ENCODE measurements at regions of chr10 and their contacts with region 1.

Region 1: GRCh38 chr10:63166742-63167258 is 33.7 kb downstream of the NRBF2 start:
- DNase-seq: peak; percentile 19
- ATAC-seq: peak; percentile 84
- H3K4me3 Mint-ChIP-seq: no peak overlapping the region
- H3K27ac Mint-ChIP-seq: no peak overlapping the region
- H3K4me1 Mint-ChIP-seq: peaks cover 35% of the 10 kb centered on the region
- H3K27me3 Mint-ChIP-seq: no peaks in the 10 kb centered on the region
- CTCF ChIP-seq: peak; percentile 79

Region 2: GRCh38 chr10:63073931-63074330 is 92.9 kb before region 1 on chr10:
- CTCF ChIA-PET with region 1: no interaction called
- POLR2A ChIA-PET with region 1: no interaction called
- intact Hi-C with region 1: no loop called
- DNase-seq: no peak
- ATAC-seq: no peak
- H3K4me3 Mint-ChIP-seq: no peak overlapping the region
- H3K27ac Mint-ChIP-seq: no peak overlapping the region
- H3K4me1 Mint-ChIP-seq: peaks cover 7% of the 10 kb centered on the region
- H3K27me3 Mint-ChIP-seq: peaks cover 21% of the 10 kb centered on the region
- CTCF ChIP-seq: no peak

Region 3: DNA sequence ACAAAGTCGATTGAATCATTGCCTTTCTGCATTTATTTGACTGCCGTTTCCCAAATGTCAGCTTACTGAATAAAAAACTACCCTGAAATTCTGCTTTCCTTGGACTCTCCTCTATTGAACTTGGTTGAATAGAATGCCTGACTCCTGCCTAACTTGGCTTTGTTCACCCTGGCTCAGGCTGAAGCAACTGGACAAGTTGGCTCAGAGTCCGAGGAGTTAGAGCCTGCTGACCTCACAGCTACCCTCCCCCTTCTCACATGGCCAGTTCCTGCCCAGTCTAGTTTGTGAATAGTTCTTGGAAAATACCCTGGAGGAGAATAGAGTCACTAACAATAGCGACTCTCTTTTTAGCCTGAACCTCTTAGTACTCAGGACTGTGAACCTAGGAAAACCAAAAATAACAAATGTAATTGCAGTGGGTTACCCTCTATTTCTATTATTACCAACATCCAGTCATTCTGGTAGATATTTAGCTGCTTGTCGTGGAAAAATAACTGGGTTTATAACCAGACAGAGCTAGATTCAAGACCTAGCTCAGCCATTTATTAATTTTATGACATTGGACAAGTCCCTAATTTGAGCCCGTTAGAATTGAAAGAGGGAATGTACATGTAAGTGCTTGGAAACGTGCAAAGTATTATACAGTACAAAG is 50.9 kb before region 1 on chr10:
- CTCF ChIA-PET with region 1: no interaction called
- POLR2A ChIA-PET with region 1: no interaction called
- intact Hi-C with region 1: no loop called
- DNase-seq: no peak
- ATAC-seq: no peak
- H3K4me3 Mint-ChIP-seq: no peak overlapping the region
- H3K27ac Mint-ChIP-seq: no peak overlapping the region
- H3K4me1 Mint-ChIP-seq: no peaks in the 10 kb centered on the region
- H3K27me3 Mint-ChIP-seq: no peaks in the 10 kb centered on the region
- CTCF ChIP-seq: no peak

Region 4: DNA sequence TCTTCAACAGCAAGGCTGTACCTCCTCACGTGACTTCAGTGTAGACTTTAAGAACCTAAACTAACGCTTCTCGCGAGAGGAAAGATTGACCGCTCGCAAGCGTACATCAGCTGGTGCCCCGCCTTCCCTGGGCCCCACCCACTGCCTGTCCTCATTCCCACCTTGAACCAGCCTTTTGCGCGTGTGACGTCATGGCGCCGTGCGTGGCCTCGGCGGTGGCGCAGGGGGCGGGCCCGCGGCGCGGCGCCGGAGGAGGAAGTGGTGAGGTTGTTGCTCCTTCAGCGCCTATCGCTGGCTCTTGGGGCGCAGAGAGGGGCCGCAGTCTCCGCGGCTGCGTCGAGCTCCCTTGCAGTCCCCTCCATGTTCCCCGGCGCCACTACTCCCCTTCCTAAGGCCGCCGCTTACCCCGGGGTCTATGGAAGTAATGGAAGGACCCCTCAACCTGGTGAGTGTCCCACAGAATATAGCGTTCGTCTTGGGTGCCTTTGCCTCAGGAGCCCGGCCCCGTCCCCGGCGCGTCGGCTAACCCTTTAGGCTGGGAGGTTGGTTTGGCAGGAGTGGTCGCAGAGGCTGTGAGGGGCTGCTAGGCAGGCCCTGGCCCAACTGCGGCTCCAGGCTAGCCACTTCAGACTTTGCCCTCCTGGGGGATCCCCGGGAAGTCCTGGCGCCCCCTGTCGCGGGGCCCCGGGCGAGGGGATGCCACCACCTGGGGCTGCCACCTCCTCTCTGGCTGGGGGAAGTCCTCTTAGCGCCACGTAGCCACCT is 33.6 kb before region 1 on chr10 and contains the start of gene NRBF2:
- CTCF ChIA-PET with region 1: interaction called, 17 read pairs
- POLR2A ChIA-PET with region 1: no interaction called
- intact Hi-C with region 1: no loop called
- DNase-seq: peak; percentile 99
- ATAC-seq: peak; percentile 92
- H3K4me3 Mint-ChIP-seq: peak within 1 kb of the TSS; percentile 91
- H3K27ac Mint-ChIP-seq: peak within 1 kb of the TSS; percentile 94
- H3K4me1 Mint-ChIP-seq: peaks cover 32% of the 10 kb centered on the region
- H3K27me3 Mint-ChIP-seq: no peaks in the 10 kb centered on the region
- CTCF ChIP-seq: no peak
- total RNA-seq, gene NRBF2: 23.1 to 24.1 TPM

Region 5: DNA sequence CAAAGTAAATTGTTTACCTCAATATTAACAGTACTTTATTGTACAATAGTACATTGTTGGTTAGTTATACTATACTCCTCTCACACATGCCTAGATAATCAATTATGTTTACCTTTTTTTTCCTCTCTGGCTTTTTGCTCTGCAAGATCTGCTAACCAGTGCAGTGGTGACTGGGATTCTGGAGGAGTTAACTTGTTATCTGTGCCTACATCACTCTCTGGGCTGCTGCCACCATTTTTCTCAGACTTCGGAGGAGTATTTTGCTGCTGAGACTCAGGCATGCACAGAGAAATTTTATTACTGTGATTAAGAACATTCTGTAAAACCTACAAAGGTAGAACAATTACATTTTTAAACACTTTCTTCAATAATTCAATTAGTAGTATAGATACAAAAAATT is 26.0 kb after region 1 on chr10:
- CTCF ChIA-PET with region 1: interaction called, 20 read pairs
- POLR2A ChIA-PET with region 1: no interaction called
- intact Hi-C with region 1: no loop called
- DNase-seq: no peak
- ATAC-seq: no peak
- H3K4me3 Mint-ChIP-seq: no peak overlapping the region
- H3K27ac Mint-ChIP-seq: peak overlapping the region; percentile 10
- H3K4me1 Mint-ChIP-seq: no peaks in the 10 kb centered on the region
- H3K27me3 Mint-ChIP-seq: no peaks in the 10 kb centered on the region
- CTCF ChIP-seq: no peak

Region 6: DNA sequence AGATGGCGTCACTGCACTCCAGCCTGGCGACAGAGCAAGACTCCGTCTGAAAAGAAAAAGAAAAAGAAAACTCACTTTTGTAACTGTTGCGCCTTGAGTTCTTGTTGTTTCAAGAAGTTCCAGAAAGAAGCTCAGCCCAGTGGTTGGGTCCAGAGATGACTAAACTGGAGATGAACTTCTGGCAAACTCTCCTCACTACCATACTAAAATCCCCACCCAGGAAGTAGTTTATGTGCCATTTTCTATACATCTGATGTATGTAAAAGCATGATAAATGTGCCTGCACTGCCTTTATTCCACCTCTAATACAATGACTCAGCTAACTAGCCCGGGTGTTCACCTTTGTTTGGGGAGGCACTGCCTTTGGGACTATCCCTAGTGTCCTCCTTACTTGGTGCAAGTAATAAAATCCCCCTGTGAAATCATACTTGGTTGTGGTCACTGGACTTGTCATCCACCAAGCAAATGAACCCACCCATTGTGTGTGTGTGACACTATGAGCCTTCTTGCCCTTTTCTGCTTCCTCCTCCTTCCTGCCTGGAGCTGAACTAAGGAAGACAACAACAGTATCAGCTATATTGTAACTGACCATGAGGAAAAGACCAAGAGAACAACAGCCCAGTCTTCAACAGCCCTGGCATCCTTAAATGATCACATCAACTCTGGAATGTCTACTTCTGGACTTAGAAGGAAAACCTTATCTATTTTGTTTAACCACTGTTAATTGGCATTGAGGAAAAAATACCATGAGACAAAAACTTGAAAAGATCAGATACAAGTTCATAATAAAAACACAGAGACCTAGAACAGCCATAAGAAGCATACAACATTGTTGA is 265.4 kb after region 1 on chr10:
- CTCF ChIA-PET with region 1: no interaction called
- POLR2A ChIA-PET with region 1: no interaction called
- intact Hi-C with region 1: no loop called
- DNase-seq: peak; percentile 39
- ATAC-seq: peak; percentile 90
- H3K4me3 Mint-ChIP-seq: no peak overlapping the region
- H3K27ac Mint-ChIP-seq: peak overlapping the region; percentile 50
- H3K4me1 Mint-ChIP-seq: peaks cover 38% of the 10 kb centered on the region
- H3K27me3 Mint-ChIP-seq: no peaks in the 10 kb centered on the region
- CTCF ChIP-seq: no peak

Region 7: GRCh38 chr10:63521416-63522276 is 354.8 kb after region 1 on chr10:
- CTCF ChIA-PET with region 1: interaction called, 16 read pairs
- POLR2A ChIA-PET with region 1: no interaction called
- intact Hi-C with region 1: no loop called
- DNase-seq: peak; percentile 60
- ATAC-seq: peak; percentile 65
- H3K4me3 Mint-ChIP-seq: peak overlapping the region; percentile 88
- H3K27ac Mint-ChIP-seq: peak overlapping the region; percentile 92
- H3K4me1 Mint-ChIP-seq: peaks cover 51% of the 10 kb centered on the region
- H3K27me3 Mint-ChIP-seq: no peaks in the 10 kb centered on the region
- CTCF ChIP-seq: no peak

Region 8: DNA sequence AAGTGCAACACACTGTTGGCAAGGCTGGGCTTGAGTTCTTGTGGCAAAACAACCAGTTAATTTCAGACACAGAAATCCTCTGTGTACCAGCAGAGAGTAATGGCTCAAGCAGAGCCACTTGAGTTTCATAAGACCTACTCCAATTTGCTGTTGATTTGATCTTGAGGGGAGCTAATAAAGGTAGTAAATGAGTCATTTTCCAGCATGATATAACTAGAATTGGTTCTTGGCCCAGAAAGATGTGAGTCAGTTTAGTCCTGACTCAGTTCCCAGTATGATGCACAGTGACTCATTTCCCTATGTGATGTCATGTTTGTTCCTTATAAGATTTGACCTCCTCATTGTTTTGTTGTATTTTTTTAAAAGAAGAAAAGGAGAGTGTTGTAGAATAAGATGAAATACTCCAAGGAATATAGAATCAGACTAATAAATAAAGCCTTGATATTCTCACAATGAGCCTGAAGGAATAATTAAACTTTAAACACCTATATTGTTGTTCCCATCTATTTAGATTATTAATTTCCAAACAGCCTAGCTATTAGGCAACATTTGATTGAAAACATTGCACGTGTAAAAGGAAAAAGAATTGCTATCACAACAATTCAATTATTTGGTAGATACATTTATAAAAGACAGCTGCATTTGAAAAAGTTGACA is 540.6 kb after region 1 on chr10:
- CTCF ChIA-PET with region 1: interaction called, 19 read pairs
- POLR2A ChIA-PET with region 1: interaction called, 3 read pairs
- intact Hi-C with region 1: no loop called
- DNase-seq: peak; percentile 51
- ATAC-seq: peak; percentile 94
- H3K4me3 Mint-ChIP-seq: no peak overlapping the region
- H3K27ac Mint-ChIP-seq: peak overlapping the region; percentile 48
- H3K4me1 Mint-ChIP-seq: peaks cover 37% of the 10 kb centered on the region
- H3K27me3 Mint-ChIP-seq: no peaks in the 10 kb centered on the region
- CTCF ChIP-seq: no peak